ENCODE measurements at regions of chr6 and their contacts with region 1.

Region 1: GRCh38 chr6:34223956-34224940 is 12.4 kb upstream of the HMGA1 start:
- DNase-seq: peak; percentile 93
- H3K4me3 Mint-ChIP-seq: peak overlapping the region; percentile 68
- H3K27ac Mint-ChIP-seq: peak overlapping the region; percentile 39
- H3K4me1 Mint-ChIP-seq: peaks cover 6% of the 10 kb centered on the region
- H3K27me3 Mint-ChIP-seq: no peaks in the 10 kb centered on the region
- CTCF ChIP-seq: no peak

Region 2: GRCh38 chr6:34036357-34037069 is 187.7 kb before region 1 on chr6:
- CTCF ChIA-PET with region 1: no interaction called
- POLR2A ChIA-PET with region 1: no interaction called
- intact Hi-C with region 1: no loop called
- DNase-seq: no peak
- H3K4me3 Mint-ChIP-seq: no peak overlapping the region
- H3K27ac Mint-ChIP-seq: no peak overlapping the region
- H3K4me1 Mint-ChIP-seq: no peaks in the 10 kb centered on the region
- H3K27me3 Mint-ChIP-seq: peaks cover 39% of the 10 kb centered on the region
- CTCF ChIP-seq: no peak

Region 3: DNA sequence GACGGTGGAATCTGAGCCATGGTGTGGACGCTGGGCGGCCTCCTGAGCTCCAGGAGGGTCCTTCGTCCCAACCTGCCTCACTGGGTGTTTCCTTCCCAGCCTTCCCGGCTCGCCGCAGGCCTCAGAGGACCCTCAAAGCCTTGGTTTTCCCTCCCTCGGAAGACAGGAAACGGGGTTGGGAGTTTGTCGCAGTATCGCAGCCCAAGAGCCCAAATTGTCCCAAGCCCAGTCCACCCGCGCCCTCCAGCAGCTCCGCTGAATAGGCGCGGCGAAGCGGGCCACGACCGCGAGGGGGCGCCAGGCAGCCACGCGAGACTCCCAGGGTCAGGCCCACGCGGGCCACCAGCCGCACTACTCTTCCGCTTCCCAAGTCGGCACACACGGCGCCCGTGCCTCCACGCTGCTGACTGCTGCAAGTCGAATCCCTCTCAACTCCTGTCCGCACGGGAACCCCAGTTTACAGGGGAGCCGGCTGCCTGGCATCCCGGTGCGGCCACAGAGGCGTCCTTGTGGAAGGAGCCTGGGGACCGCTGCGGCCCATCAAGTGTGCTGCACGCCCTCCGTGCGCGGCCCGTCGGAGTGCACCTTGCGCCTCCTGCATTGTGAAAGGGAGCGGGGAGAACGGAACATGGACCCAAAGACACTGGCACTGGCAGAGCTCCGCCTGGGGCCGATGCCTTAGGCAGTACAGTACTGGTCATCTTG is 28.0 kb before region 1 on chr6:
- CTCF ChIA-PET with region 1: interaction called, 12 read pairs
- POLR2A ChIA-PET with region 1: interaction called, 4 read pairs
- intact Hi-C with region 1: no loop called
- DNase-seq: peak; percentile 62
- H3K4me3 Mint-ChIP-seq: peak overlapping the region; percentile 66
- H3K27ac Mint-ChIP-seq: no peak overlapping the region
- H3K4me1 Mint-ChIP-seq: peaks cover 7% of the 10 kb centered on the region
- H3K27me3 Mint-ChIP-seq: no peaks in the 10 kb centered on the region
- CTCF ChIP-seq: peak; percentile 97

Region 4: DNA sequence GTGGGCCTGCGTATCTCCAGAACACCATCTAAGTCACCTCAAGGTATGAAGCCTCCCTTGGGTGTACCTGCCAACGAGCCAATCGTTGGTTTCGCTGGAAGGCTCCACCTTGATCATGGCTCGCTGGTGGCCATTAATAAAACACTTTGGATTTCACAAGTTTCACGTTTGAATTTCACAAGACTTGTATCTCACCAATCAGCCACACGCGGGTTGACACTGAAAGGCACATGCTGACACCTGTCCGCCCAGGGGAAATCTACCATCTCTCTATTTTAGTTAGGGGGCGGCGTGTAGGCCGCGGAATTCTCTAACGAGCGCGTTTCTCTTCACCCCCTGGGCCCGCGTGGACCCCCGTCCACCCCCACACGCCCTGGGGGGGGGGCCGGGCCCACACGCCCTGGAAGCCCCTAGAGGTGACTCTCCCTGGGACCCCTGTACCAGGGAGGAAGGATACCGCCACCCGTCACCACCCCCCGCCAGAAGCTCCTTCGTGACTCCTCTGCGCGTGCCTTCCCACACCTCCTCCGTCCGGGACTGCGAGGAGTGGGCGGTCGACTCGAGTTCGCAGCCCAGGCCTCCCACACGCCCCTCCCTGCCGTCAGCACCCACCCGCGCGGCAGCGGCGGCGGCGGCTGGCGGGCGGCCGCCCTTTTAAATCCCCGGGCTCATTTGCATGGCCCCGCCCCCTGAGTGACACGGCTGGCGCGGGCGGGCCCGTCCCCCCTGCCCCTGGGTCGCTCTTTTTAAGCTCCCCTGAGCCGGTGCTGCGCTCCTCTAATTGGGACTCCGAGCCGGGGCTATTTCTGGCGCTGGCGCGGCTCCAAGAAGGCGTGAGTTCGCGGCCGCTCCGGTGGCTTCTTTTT is 12.1 kb after region 1 on chr6 and contains the start of gene HMGA1:
- CTCF ChIA-PET with region 1: interaction called, 3 read pairs
- POLR2A ChIA-PET with region 1: interaction called, 21 read pairs
- intact Hi-C with region 1: no loop called
- DNase-seq: peak; percentile 92
- H3K4me3 Mint-ChIP-seq: peak within 1 kb of the TSS; percentile 70
- H3K27ac Mint-ChIP-seq: no peak within 1 kb of the TSS
- H3K4me1 Mint-ChIP-seq: peaks cover 12% of the 10 kb centered on the region
- H3K27me3 Mint-ChIP-seq: no peaks in the 10 kb centered on the region
- CTCF ChIP-seq: no peak
- total RNA-seq, gene HMGA1: 154 and 202 TPM in 2 replicates

Region 5: GRCh38 chr6:34267746-34268145 is 43.5 kb after region 1 on chr6:
- CTCF ChIA-PET with region 1: no interaction called
- POLR2A ChIA-PET with region 1: no interaction called
- intact Hi-C with region 1: no loop called
- DNase-seq: no peak
- H3K4me3 Mint-ChIP-seq: no peak overlapping the region
- H3K27ac Mint-ChIP-seq: no peak overlapping the region
- H3K4me1 Mint-ChIP-seq: no peaks in the 10 kb centered on the region
- H3K27me3 Mint-ChIP-seq: no peaks in the 10 kb centered on the region
- CTCF ChIP-seq: no peak

Region 6: GRCh38 chr6:34465531-34466241 is 241.4 kb after region 1 on chr6 and contains the start of gene PACSIN1:
- CTCF ChIA-PET with region 1: no interaction called
- POLR2A ChIA-PET with region 1: no interaction called
- intact Hi-C with region 1: no loop called
- DNase-seq: no peak
- H3K4me3 Mint-ChIP-seq: no peak within 1 kb of the TSS
- H3K27ac Mint-ChIP-seq: no peak within 1 kb of the TSS
- H3K4me1 Mint-ChIP-seq: peaks cover 6% of the 10 kb centered on the region
- H3K27me3 Mint-ChIP-seq: no peaks in the 10 kb centered on the region
- CTCF ChIP-seq: no peak
- total RNA-seq, gene PACSIN1: not detected in 2 replicates